ENCODE measurements at regions of chr20 and their contacts with region 1.

Region 1: DNA sequence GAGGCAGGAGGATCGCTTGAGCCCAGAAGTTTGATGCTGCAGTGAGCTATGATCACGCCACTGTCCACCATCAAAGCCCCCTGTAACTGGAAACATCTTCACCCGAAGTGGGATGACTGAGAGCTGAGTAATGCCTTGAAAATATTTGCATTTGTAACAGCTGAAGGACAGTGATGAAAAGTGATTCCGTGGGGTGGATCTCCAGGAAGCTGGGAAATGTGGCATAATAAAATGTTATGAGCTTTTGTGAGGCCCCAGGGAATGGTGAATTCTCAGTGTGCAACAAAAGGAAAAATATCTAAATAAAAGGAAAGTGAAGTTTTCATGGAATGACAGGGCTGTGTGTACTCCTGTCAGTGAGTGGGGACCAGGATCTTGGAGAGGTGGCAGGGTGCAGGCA is 92.0 kb downstream of the JAG1 start:
- DNase-seq: no peak
- H3K4me3 ChIP-seq: no peak overlapping the region
- H3K27ac ChIP-seq: no peak overlapping the region
- H3K4me1 ChIP-seq: peaks cover 48% of the 10 kb centered on the region
- H3K27me3 ChIP-seq: no peaks in the 10 kb centered on the region
- CTCF ChIP-seq: no peak

Region 2: GRCh38 chr20:10597637-10598036 is 15.8 kb after region 1 on chr20:
- CTCF ChIA-PET with region 1: no interaction called
- dilution Hi-C with region 1: no loop called
- in situ Hi-C with region 1: no loop called
- intact Hi-C with region 1: loop called (anchors 2 kb)
- DNase-seq: no peak
- H3K4me3 ChIP-seq: no peak overlapping the region
- H3K27ac ChIP-seq: peak overlapping the region; percentile 58
- H3K4me1 ChIP-seq: peaks cover 59% of the 10 kb centered on the region
- H3K27me3 ChIP-seq: no peaks in the 10 kb centered on the region
- CTCF ChIP-seq: no peak

Measured in mammary epithelial cell (primary cell).